Endothelial cell of umbilical vein (primary cell): ENCODE measurements at regions of chr6 and their contacts with region 1.

Region 1: GRCh38 chr6:167219967-167220512 is 62.3 kb upstream of the GPR31 start:
- DNase-seq: no peak
- H3K4me3 ChIP-seq: no peak overlapping the region
- H3K27ac ChIP-seq: no peak overlapping the region
- H3K4me1 ChIP-seq: peaks cover 12% of the 10 kb centered on the region
- H3K27me3 ChIP-seq: no peaks in the 10 kb centered on the region
- CTCF ChIP-seq: no peak
- POLR2A ChIP-seq: no peak

Region 2: GRCh38 chr6:166999145-166999883 is 220.7 kb before region 1 on chr6 and contains the start of gene CEP43:
- CTCF ChIA-PET with region 1: no interaction called
- POLR2A ChIA-PET with region 1: no interaction called
- dilution Hi-C with region 1: no loop called
- intact Hi-C with region 1: loop called (anchors 10 kb)
- DNase-seq: peak; percentile 98
- H3K4me3 ChIP-seq: peak within 1 kb of the TSS; percentile 60 to 93 (median 86)
- H3K27ac ChIP-seq: peak within 1 kb of the TSS; percentile 52
- H3K4me1 ChIP-seq: peaks cover 20% of the 10 kb centered on the region
- H3K27me3 ChIP-seq: no peaks in the 10 kb centered on the region
- CTCF ChIP-seq: no peak
- POLR2A ChIP-seq: peak; percentile 61
- total RNA-seq, gene CEP43: 19.0 and 22.5 TPM in 2 replicates

Region 3: DNA sequence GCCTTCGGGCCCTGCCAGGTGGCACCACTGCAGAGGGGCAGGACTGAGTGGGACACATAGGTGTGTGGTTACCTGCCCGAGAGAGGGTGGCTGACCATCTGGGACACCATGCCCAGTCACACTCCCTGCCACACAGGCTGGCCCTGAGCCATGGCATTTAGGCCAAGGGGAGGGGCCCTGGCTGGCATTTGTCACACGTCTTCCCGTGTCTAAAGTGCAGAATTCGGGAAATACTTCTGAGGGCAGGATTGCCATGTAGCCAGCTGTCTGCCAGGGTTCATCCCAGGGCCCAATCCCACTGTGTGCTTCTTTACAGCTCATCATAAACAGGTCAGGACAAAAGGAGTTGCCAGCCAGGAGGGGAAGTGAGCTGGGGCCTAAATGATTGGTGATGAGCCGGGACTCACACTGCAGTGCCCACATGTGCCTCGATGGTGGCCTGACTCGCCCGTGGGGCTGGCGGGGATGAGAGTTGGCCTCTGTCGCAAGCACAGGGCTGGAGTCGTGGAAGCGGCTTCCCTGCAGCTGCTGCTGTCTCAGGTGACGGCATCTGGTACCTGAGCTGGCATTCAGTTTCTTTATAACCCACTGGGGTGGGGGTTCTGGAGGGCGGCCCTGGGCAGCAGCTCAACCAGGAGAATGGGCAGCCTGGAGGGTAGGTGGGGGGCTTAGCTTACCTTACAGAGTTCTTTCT is 65.2 kb after region 1 on chr6:
- CTCF ChIA-PET with region 1: interaction called, 19 read pairs
- POLR2A ChIA-PET with region 1: interaction called, 3 read pairs
- dilution Hi-C with region 1: no loop called
- intact Hi-C with region 1: loop called (anchors 1 kb)
- DNase-seq: no peak
- H3K4me3 ChIP-seq: no peak overlapping the region
- H3K27ac ChIP-seq: no peak overlapping the region
- H3K4me1 ChIP-seq: no peaks in the 10 kb centered on the region
- H3K27me3 ChIP-seq: no peaks in the 10 kb centered on the region
- CTCF ChIP-seq: no peak
- POLR2A ChIP-seq: no peak

Region 4: GRCh38 chr6:167350731-167351655 is 131.0 kb after region 1 on chr6:
- CTCF ChIA-PET with region 1: interaction called, 17 read pairs
- POLR2A ChIA-PET with region 1: no interaction called
- dilution Hi-C with region 1: no loop called
- intact Hi-C with region 1: loop called (anchors 2 kb)
- DNase-seq: peak; percentile 76
- H3K4me3 ChIP-seq: peak overlapping the region in 2 of 3 experiments; percentile 23 to 33
- H3K27ac ChIP-seq: no peak overlapping the region
- H3K4me1 ChIP-seq: peaks cover 6% of the 10 kb centered on the region
- H3K27me3 ChIP-seq: peaks cover 0 to 5% of the 10 kb centered on the region in 2 experiments
- CTCF ChIP-seq: peak; percentile 83 to 86
- POLR2A ChIP-seq: no peak

Region 5: DNA sequence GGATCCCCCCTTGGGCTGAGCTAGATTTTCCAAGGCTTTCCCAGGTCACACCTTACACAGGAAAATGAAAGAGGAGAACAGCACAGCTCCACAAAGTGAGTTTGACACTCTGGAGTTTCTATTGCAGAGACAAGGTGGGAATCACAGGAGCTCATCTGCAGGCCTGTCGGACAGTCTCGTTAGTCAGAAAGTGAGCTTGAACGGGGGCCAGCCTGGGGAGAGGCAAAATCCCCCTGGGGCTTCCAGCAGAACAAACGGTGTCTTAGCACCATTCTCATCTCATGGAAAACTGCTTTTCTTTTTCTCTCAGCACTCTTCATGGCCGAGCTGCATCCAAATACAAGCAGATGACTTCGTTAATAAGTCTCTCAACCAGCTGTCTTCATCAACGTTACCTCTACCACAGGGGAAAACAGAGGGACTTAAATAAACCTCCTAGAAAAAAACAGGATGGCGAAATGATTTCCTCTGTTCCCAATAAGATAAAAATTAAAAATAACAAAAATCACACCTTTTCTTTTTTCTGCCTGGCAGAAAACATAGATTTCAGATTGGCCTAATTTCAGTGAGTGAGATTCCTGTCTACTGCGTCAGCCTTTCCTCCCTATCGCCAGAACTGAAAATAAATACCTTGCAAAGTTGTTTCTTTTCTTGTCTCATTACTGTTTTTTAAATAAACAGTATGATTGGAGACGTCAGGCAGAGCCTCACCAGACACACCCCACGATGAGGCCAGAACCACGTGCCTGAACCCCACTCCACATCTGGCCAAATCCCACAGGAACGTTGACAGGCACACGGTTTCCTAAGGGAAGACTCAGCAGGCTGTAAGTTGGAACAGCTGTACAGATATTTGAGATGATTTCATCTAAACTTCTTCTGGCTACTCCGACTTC is 323.8 kb after region 1 on chr6:
- CTCF ChIA-PET with region 1: no interaction called
- POLR2A ChIA-PET with region 1: no interaction called
- dilution Hi-C with region 1: no loop called
- intact Hi-C with region 1: loop called (anchors 10 kb)
- DNase-seq: peak; percentile 62
- H3K4me3 ChIP-seq: peak overlapping the region in 1 of 3 experiments; percentile 5
- H3K27ac ChIP-seq: peak overlapping the region; percentile 89
- H3K4me1 ChIP-seq: peaks cover 25% of the 10 kb centered on the region
- H3K27me3 ChIP-seq: no peaks in the 10 kb centered on the region
- CTCF ChIP-seq: no peak
- POLR2A ChIP-seq: no peak

Region 6: DNA sequence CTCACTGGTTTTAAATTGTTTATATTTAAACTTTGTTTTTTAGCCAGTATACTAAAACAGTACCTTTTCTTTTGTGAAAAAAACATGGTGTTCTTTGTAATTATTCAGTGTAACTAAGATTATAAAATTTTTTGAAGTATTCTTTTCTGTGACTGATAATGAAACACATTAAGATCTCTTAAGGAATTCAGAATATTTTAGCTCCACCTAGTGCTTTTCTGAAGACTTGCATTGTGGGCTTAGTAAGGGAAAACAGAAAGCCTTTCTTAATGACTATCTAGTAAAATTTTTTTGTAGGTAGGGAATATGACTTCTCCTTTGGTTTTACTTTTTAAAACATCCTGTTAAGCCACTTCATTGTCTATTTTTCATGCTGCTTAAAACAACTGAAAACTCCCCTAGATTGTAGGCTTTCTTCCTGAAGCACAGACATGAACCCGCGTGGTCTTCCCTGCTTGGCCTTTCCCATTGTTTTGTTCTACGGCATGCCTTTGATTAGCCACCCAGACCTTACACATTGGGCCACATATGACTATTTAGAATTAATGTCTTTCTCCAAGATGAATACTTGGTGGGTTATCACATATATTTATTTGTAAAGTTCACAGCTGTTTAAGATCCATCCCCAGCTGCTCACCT is 678.8 kb after region 1 on chr6:
- CTCF ChIA-PET with region 1: no interaction called
- POLR2A ChIA-PET with region 1: no interaction called
- dilution Hi-C with region 1: no loop called
- intact Hi-C with region 1: loop called (anchors 5 kb)
- DNase-seq: peak; percentile 41
- H3K4me3 ChIP-seq: no peak overlapping the region
- H3K27ac ChIP-seq: no peak overlapping the region
- H3K4me1 ChIP-seq: no peaks in the 10 kb centered on the region
- H3K27me3 ChIP-seq: no peaks in the 10 kb centered on the region
- CTCF ChIP-seq: peak; percentile 44 to 52
- POLR2A ChIP-seq: no peak